RWPE1 (cell line): ENCODE measurements at regions of chr15 and their contacts with region 1.

Region 1: GRCh38 chr15:83446904-83447709 is at the start of gene SH3GL3:
- DNase-seq: peak; percentile 77
- H3K27ac ChIP-seq: peak within 1 kb of the TSS; percentile 53
- CTCF ChIP-seq: peak; percentile 83

Region 2: GRCh38 chr15:83248151-83249029 is 198.7 kb before region 1 on chr15:
- CTCF ChIA-PET with region 1: interaction called, 18 read pairs
- POLR2A ChIA-PET with region 1: no interaction called
- DNase-seq: peak; percentile 39
- H3K27ac ChIP-seq: no peak overlapping the region
- CTCF ChIP-seq: peak; percentile 97

Region 3: GRCh38 chr15:83559310-83559966 is 112.3 kb after region 1 on chr15:
- CTCF ChIA-PET with region 1: interaction called, 20 read pairs
- POLR2A ChIA-PET with region 1: no interaction called
- DNase-seq: peak; percentile 86
- H3K27ac ChIP-seq: no peak overlapping the region
- CTCF ChIP-seq: peak; percentile 94

Region 4: GRCh38 chr15:83564975-83565532 is 117.9 kb after region 1 on chr15:
- CTCF ChIA-PET with region 1: interaction called, 20 read pairs
- POLR2A ChIA-PET with region 1: no interaction called
- DNase-seq: no peak
- H3K27ac ChIP-seq: no peak overlapping the region
- CTCF ChIP-seq: no peak